A673 (cell line): ENCODE measurements at regions of chr15 and their contacts with region 1.

Region 1: DNA sequence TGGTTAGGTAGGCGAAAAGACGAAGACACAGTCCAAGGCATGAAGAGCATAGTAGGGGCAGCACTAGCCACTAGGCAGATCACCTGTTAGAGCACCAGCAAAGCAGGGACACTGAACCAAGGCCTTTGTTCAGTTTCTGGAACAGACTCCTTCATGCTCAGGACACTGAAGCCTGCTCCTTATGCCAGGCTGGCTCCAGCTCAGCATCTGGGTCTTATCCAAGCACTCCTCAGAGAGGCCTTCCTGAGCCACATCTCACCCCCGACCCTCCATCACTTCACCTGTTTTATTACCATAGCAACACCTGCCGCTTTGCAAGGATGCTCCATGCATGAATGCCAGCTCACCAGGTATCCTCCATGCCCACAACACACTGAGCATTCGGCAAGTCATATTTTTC is 206.3 kb upstream of the CHRNA7 start:
- DNase-seq: no peak
- H3K4me3 ChIP-seq: no peak overlapping the region
- H3K27ac ChIP-seq: no peak overlapping the region
- H3K4me1 ChIP-seq: no peaks in the 10 kb centered on the region
- H3K27me3 ChIP-seq: no peaks in the 10 kb centered on the region
- CTCF ChIP-seq: no peak

Region 2: GRCh38 chr15:30985081-30985531 is 838.9 kb before region 1 on chr15:
- CTCF ChIA-PET with region 1: no interaction called
- POLR2A ChIA-PET with region 1: interaction called, 15 read pairs
- intact Hi-C with region 1: no loop called
- DNase-seq: peak; percentile 27
- H3K4me3 ChIP-seq: no peak overlapping the region
- H3K27ac ChIP-seq: no peak overlapping the region
- H3K4me1 ChIP-seq: peaks cover 13% of the 10 kb centered on the region
- H3K27me3 ChIP-seq: no peaks in the 10 kb centered on the region
- CTCF ChIP-seq: no peak

Region 3: GRCh38 chr15:32053719-32054118 is 229.7 kb after region 1 on chr15:
- CTCF ChIA-PET with region 1: no interaction called
- POLR2A ChIA-PET with region 1: no interaction called
- intact Hi-C with region 1: no loop called
- DNase-seq: peak; percentile 0
- H3K4me3 ChIP-seq: no peak overlapping the region
- H3K27ac ChIP-seq: no peak overlapping the region
- H3K4me1 ChIP-seq: no peaks in the 10 kb centered on the region
- H3K27me3 ChIP-seq: no peaks in the 10 kb centered on the region
- CTCF ChIP-seq: no peak